Upper lobe of right lung (tissue), 1 donor: ENCODE measurements at regions of chr1 and their contacts with region 1.

Region 1: DNA sequence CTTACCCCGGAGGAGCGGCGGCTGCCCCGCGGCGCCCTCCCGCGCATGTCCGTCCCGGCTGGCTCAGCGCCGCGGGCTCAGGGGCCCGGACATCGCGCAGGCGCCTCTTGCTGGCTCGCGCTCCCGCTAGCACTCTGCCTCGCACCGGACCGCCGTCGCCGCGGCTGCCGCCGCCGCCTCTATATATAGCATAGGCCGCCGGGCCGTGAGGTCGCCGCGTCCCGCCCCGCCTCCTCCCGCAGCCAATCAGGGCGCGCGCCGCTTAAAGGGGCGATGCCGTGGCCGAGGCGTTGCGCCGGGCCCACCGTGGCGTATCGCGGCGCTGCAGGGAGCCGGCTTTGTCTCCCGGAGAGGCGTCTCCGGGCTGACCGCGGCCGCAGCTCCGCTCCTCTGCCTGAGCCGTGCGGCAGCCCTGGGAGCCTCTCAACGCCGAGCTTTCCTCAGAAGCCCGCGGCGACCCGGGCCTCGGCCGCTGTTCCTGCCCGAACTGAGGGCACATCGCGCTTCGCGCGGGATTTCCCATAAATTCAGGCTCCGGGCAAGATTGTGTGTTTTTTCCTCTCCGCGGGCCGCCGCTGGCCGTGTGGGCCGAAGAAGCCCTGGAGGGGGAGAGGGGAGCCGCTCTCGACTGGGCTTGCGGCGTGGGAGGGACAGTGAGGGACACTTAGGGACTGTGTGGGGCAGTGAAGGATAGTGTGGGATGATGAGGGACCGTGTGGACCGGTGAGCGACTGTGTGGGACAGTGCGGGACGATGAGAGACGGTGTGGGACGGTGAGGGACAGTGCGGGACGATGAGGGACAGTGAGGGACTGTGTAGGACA is at the start of gene ERRFI1:
- DNase-seq: peak; percentile 97
- ATAC-seq: peak; percentile 95
- H3K4me3 ChIP-seq: peak within 1 kb of the TSS; percentile 76
- H3K27ac ChIP-seq: peak within 1 kb of the TSS; percentile 95
- H3K4me1 ChIP-seq: peaks cover 31% of the 10 kb centered on the region
- H3K27me3 ChIP-seq: no peaks in the 10 kb centered on the region
- CTCF ChIP-seq: no peak
- total RNA-seq, gene ERRFI1: 92.8 TPM

Region 2: DNA sequence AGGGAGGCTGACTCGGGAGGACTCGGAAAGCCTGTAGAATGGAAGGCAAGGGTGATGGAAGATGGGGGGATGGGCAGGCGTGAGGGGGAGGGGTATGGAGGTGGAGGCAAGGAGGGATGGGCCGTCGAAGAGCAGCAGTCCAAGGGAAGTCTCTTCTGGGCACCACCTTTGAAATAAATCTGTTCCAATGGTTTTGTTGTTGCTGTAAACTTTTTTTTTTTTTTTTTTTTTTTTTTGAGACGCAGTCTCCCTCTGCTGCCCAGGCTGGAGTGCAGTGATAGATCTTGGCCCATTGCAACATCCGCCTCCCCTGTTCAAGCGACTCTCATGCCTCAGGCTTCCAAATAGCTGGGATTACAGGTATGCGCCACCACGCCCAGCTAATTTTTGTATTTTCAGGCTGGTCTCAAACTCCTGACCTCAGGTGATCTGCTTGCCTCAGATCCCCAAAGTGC is 212.5 kb after region 1 on chr1:
- intact Hi-C with region 1: loop called (anchors 10 kb)
- DNase-seq: peak; percentile 73
- ATAC-seq: peak; percentile 87
- H3K4me3 ChIP-seq: no peak overlapping the region
- H3K27ac ChIP-seq: peak overlapping the region; percentile 17
- H3K4me1 ChIP-seq: peaks cover 10% of the 10 kb centered on the region
- H3K27me3 ChIP-seq: no peaks in the 10 kb centered on the region
- CTCF ChIP-seq: peak; percentile 42

Region 3: DNA sequence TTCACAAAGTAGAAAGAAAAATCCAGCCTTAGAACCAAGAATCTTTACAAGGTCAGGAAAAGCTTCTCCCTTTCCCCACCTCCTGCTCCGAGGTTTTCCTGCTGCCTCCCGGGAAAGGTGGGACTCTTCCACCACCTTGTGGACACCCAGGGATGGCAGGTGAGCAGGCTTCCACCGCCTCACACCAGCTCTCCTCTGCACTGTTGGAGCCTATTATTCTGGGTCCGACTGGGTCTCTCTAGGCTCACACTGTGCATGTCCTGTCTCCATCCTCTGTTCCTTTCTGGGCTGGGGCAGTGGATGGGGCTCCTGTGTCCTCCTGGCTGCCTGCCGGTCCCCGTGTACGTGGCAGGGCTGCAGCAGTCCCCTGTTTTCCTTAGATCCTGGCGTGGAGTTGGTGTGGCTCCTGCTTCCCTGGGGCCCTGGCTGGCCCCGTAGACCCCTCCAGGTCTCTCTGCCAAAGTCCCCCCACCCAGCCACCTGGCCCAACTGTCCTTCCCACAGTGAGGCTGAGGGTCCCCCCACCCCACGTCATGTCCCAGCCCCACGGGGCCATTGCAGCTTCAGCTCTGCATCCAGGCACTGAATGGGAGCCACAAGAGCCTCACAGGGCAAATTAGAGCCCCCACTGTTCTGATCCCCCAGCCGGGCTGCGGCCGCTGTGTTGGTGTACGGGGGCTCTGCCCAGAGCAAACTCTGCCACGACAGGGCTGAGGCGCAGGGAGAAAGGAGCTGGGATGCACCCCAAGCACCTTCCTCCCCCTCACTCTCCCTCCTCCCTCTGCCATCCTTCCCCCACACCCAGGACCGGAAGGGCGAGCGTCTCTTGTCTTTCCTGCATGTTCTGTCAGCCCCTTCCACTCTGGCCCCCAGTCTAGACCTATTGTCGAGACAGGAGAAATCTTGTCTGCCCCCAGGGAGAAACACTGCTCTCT is 288.2 kb after region 1 on chr1:
- intact Hi-C with region 1: loop called (anchors 10 kb)
- DNase-seq: peak; percentile 84
- ATAC-seq: peak; percentile 91
- H3K4me3 ChIP-seq: no peak overlapping the region
- H3K27ac ChIP-seq: no peak overlapping the region
- H3K4me1 ChIP-seq: peaks cover 13% of the 10 kb centered on the region
- H3K27me3 ChIP-seq: peaks cover 3% of the 10 kb centered on the region
- CTCF ChIP-seq: peak; percentile 88